ENCODE measurements at regions of chr11 and their contacts with region 1.

Region 1: DNA sequence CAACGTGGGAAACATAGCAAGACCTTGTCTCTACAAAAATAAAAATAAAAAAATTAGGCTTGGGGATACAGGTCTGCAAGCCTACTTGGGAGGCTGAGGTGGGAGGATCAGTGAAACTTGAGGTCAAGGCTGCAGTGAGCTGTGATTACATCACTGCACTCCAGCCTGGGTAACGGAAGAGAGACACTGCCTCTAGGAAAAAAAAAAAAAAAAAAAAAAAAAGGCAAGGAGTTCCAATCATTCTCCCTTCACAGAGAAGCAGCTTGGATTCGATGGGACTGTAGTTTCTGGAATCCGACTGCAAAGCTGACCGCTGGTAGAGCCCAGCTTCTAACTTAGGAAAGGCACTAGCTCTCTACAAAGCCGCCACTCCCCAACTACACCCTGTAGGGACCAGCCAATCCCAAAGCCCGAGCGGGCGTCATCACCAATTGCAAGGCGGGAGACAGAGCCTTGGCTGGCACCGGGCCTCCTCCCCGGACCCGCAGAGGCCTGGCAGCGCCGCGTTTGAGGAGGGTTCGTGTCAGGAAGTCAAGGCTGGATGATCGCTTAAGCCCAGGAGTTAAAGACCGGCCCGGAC is 699 bp upstream of the DDB2 start:
- DNase-seq: peak; percentile 93
- ATAC-seq: peak; percentile 74
- H3K4me3 Mint-ChIP-seq: peak overlapping the region; percentile 93
- H3K27ac Mint-ChIP-seq: peak overlapping the region; percentile 100
- H3K4me1 Mint-ChIP-seq: peaks cover 24% of the 10 kb centered on the region
- H3K27me3 Mint-ChIP-seq: no peaks in the 10 kb centered on the region
- CTCF ChIP-seq: no peak

Region 2: GRCh38 chr11:47186076-47186936 is 27.8 kb before region 1 on chr11 and contains the start of gene PACSIN3:
- CTCF ChIA-PET with region 1: interaction called, 7 read pairs
- POLR2A ChIA-PET with region 1: interaction called, 38 read pairs
- intact Hi-C with region 1: no loop called
- DNase-seq: peak; percentile 28
- ATAC-seq: peak; percentile 67
- H3K4me3 Mint-ChIP-seq: peak within 1 kb of the TSS; percentile 71
- H3K27ac Mint-ChIP-seq: no peak within 1 kb of the TSS
- H3K4me1 Mint-ChIP-seq: peaks cover 13% of the 10 kb centered on the region
- H3K27me3 Mint-ChIP-seq: peaks cover 21% of the 10 kb centered on the region
- CTCF ChIP-seq: peak; percentile 21
- total RNA-seq, gene PACSIN3: 4.7 to 8.0 TPM

Region 3: GRCh38 chr11:47233989-47234668 is 20.1 kb after region 1 on chr11:
- CTCF ChIA-PET with region 1: interaction called, 3 read pairs
- POLR2A ChIA-PET with region 1: interaction called, 63 read pairs
- intact Hi-C with region 1: no loop called
- DNase-seq: peak; percentile 19
- ATAC-seq: peak; percentile 42
- H3K4me3 Mint-ChIP-seq: no peak overlapping the region
- H3K27ac Mint-ChIP-seq: peak overlapping the region; percentile 56
- H3K4me1 Mint-ChIP-seq: peaks cover 22% of the 10 kb centered on the region
- H3K27me3 Mint-ChIP-seq: no peaks in the 10 kb centered on the region
- CTCF ChIP-seq: no peak

Region 4: DNA sequence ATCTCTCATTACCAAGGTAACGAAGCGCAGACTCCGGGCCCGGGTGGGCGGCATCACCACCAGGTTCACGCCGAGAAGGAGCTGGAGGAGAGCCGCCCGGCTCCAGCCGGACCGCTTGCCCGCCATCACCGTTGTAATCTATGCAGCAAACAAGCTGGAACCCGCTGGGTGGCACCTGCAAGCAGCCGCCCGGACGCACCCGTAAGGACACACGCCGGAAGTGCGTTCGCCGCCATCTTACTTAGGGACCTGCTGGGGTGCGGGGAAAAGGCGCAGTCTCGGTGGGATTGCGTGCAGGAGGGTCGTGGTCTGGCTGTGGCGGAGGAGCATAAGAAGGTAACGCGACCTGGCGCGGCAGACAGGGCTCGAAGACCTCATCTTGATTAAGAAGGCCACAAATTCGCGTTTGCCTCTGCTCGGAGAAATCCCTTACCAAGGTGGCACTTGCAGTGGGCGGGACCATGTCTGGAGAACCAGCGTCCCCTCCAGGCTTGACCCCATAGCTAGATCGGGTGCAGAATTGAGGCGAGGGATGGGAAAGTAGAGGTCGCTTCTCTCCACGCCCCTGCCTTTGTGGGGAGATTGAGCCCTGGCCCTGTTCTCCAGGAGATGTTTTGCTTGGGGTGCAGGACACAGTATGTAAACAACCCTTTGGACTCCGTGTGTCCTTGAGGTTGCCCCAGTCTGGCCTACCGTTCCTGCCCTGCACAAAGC is 34.7 kb after region 1 on chr11 and contains the start of gene ACP2:
- CTCF ChIA-PET with region 1: interaction called, 5 read pairs
- POLR2A ChIA-PET with region 1: interaction called, 24 read pairs
- intact Hi-C with region 1: no loop called
- DNase-seq: peak; percentile 94
- ATAC-seq: peak; percentile 97
- H3K4me3 Mint-ChIP-seq: peak within 1 kb of the TSS; percentile 95
- H3K27ac Mint-ChIP-seq: peak within 1 kb of the TSS; percentile 98
- H3K4me1 Mint-ChIP-seq: peaks cover 24% of the 10 kb centered on the region
- H3K27me3 Mint-ChIP-seq: no peaks in the 10 kb centered on the region
- CTCF ChIP-seq: no peak
- total RNA-seq, gene ACP2: 9.4 to 13.4 TPM

Region 5: DNA sequence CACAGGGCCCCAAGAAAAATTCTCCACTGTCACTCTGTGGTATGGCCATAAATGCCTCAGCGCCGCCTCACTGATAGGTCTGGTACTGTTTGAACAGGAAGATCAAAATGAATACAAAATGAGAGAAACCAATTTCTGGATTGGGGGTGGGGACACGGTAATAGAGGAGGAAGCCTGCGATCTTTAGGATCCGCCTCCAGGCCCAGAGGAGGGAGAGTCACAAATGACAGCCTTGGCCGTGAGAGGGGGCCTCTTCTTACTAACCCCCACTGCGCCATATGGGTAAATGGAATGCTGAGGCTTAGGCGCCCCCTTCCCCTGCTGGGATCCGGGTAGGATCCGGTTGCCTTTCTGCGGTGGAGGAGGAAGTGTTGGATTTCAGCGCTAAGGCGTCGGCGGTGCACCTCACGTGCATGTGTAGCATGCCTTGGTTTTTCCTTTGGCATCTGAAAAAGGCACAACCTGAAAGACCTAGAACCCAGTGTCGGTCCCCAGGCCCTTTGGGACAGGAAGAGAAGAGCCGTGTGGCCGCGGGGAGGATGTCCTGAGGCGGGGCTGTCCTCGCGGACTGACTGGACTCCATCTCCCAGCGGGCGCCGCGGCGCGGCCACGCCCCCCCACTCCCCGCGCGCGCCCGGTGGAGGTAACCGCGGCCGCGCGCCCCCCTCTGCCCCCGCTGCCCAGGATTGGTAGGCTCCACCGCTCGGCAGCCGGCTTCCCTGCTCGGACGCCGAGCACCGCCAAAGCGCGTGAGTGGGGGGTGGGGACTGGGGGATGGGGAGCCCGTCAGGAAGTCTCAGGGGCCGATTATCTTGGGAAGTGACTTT is 55.1 kb after region 1 on chr11:
- CTCF ChIA-PET with region 1: interaction called, 4 read pairs
- POLR2A ChIA-PET with region 1: interaction called, 21 read pairs
- intact Hi-C with region 1: loop called (anchors 2 kb)
- DNase-seq: peak; percentile 89
- ATAC-seq: peak; percentile 61
- H3K4me3 Mint-ChIP-seq: peak overlapping the region; percentile 76
- H3K27ac Mint-ChIP-seq: peak overlapping the region; percentile 98
- H3K4me1 Mint-ChIP-seq: peaks cover 54% of the 10 kb centered on the region
- H3K27me3 Mint-ChIP-seq: no peaks in the 10 kb centered on the region
- CTCF ChIP-seq: peak; percentile 12

Region 6: GRCh38 chr11:47593934-47594855 is 380.1 kb after region 1 on chr11 and contains the start of gene C1QTNF4:
- CTCF ChIA-PET with region 1: no interaction called
- POLR2A ChIA-PET with region 1: no interaction called
- intact Hi-C with region 1: no loop called
- DNase-seq: no peak
- ATAC-seq: no peak
- H3K4me3 Mint-ChIP-seq: no peak within 1 kb of the TSS
- H3K27ac Mint-ChIP-seq: no peak within 1 kb of the TSS
- H3K4me1 Mint-ChIP-seq: peaks cover 5% of the 10 kb centered on the region
- H3K27me3 Mint-ChIP-seq: peaks cover 29% of the 10 kb centered on the region
- CTCF ChIP-seq: no peak
- total RNA-seq, gene C1QTNF4: 0.18 TPM in 1 of 2 experiments, not detected in the other

Measured in activated CD8-positive, alpha-beta T cell treated with anti-CD3 and anti-CD28 coated beads for 36 hours (primary cell).